ENCODE measurements at regions of chr3 and their contacts with region 1.

Region 1: GRCh38 chr3:14178247-14179113 is at the starts of genes LSM3 and XPC:
- DNase-seq: peak; percentile 97 to 100 (median 99)
- H3K4me3 ChIP-seq: peak within 1 kb of the TSS; percentile 78 to 81
- H3K4me3 Mint-ChIP-seq: peak within 1 kb of the TSS; percentile 92 to 99 (median 97)
- H3K27ac ChIP-seq: peak within 1 kb of the TSS; percentile 97
- H3K27ac Mint-ChIP-seq: peak within 1 kb of the TSS; percentile 93 to 100 (median 99)
- H3K4me1 ChIP-seq: peaks cover 57% of the 10 kb centered on the region
- H3K4me1 Mint-ChIP-seq: peaks cover 55 to 81% (median 63%) of the 10 kb centered on the region in 4 donors
- H3K27me3 ChIP-seq: no peaks in the 10 kb centered on the region
- H3K27me3 Mint-ChIP-seq: no peaks in the 10 kb centered on the region
- total RNA-seq, gene LSM3: 7.2 to 8.2 TPM
- total RNA-seq, gene XPC: 104 to 108 TPM

Region 2: DNA sequence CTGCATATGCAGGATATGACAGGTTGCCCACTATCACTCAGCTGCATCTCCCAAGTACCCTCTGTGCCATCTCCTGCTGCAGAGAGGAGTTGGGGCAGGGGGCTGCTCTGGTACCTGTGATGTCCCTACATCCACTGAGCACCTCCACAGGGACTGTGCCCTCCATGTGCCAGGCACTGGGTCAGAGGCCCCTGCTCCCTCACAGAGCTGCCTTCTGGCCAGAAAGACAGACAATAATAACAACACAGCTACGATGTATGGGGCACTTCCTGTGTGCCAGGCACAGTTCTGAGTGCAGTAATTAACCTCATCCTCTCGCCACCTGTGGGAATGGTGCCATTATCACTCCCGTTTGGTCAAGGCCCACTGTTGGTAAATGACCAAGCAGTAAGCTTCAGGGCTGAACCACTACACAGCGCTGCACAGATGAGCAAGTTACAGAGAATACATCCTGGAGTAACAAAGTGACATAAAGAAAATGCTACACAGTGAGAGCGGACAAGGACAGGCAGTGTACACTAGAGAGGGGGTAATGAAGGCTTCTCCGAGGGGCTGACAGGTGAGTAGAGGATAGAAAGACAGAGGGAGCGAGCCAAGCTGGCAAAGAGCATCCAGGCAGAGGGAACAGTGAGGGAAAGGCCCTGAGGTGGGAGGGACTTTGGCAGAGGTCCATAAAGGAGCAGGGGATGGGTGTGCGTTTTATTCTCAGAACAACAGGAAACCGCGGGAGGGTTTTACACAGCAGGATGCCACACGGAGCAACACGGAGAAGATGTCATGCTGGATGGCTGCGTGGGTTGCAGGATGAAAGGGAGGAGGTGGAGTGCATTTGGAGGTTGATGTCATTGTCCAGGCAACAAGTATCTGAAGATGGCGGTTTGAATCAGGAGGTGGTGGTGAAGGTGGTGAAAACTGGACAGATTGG is 312.2 kb before region 1 on chr3:
- CTCF ChIA-PET with region 1: no interaction called
- POLR2A ChIA-PET with region 1: interaction called, 11 read pairs
- intact Hi-C with region 1: no loop called
- DNase-seq: peak; percentile 80 to 87 (median 84)
- H3K4me3 ChIP-seq: peak overlapping the region in 1 of 2 donors; percentile 36
- H3K4me3 Mint-ChIP-seq: peak overlapping the region; percentile 72 to 84 (median 79)
- H3K27ac ChIP-seq: peak overlapping the region; percentile 64
- H3K27ac Mint-ChIP-seq: peak overlapping the region; percentile 83 to 100 (median 98)
- H3K4me1 ChIP-seq: peaks cover 72% of the 10 kb centered on the region
- H3K4me1 Mint-ChIP-seq: peaks cover 48 to 75% (median 63%) of the 10 kb centered on the region in 4 donors
- H3K27me3 ChIP-seq: no peaks in the 10 kb centered on the region
- H3K27me3 Mint-ChIP-seq: no peaks in the 10 kb centered on the region

Region 3: GRCh38 chr3:14133255-14133701 is 45.2 kb before region 1 on chr3:
- CTCF ChIA-PET with region 1: no interaction called
- POLR2A ChIA-PET with region 1: interaction called, 270 read pairs
- intact Hi-C with region 1: no loop called
- DNase-seq: no peak
- H3K4me3 ChIP-seq: no peak overlapping the region
- H3K4me3 Mint-ChIP-seq: no peak overlapping the region
- H3K27ac ChIP-seq: no peak overlapping the region
- H3K27ac Mint-ChIP-seq: peak overlapping the region in 5 of 7 donors; percentile 9 to 89 (median 55)
- H3K4me1 ChIP-seq: no peaks in the 10 kb centered on the region
- H3K4me1 Mint-ChIP-seq: peaks cover 7 to 22% (median 8%) of the 10 kb centered on the region in 4 donors
- H3K27me3 ChIP-seq: no peaks in the 10 kb centered on the region
- H3K27me3 Mint-ChIP-seq: no peaks in the 10 kb centered on the region

Region 4: DNA sequence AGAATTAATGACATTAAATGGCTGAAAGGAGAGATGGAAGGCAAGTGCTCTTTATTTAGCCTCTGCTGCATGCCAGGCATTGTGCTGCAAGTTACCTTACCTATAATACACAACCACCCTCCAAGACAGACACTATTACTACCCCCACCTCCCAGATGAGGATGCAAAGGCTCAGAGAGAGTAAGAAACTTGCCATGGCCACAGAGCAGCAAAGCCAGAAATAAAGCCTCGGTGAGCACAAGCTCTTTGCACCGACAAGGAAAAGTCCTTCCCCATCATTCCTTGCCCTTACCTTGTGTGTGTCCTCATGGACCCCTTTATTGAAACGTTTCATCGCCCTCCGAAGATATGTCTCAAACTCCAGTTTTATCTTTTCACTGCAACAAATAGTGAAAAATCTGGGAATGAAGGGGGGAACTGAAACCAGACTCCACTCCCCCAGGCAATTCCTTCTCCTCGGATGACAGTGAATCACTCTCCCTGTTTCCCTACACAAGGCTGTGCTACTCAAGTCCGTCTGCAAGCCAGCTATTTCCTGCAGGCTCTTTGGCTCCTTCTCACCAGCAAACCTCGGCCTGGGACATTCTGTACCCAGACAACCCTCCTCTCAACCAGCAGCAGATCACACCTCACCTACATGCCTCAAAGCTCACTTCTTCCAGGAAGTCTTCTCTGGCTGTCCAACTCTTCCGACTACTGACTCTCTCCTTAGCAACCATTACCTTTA is 11.4 kb before region 1 on chr3:
- CTCF ChIA-PET with region 1: no interaction called
- POLR2A ChIA-PET with region 1: interaction called, 19 read pairs
- intact Hi-C with region 1: no loop called
- DNase-seq: no peak
- H3K4me3 ChIP-seq: no peak overlapping the region
- H3K4me3 Mint-ChIP-seq: no peak overlapping the region
- H3K27ac ChIP-seq: no peak overlapping the region
- H3K27ac Mint-ChIP-seq: peak overlapping the region in 4 of 7 donors; percentile 13 to 77 (median 54)
- H3K4me1 ChIP-seq: no peaks in the 10 kb centered on the region
- H3K4me1 Mint-ChIP-seq: peaks cover 13 to 43% (median 34%) of the 10 kb centered on the region in 4 donors
- H3K27me3 ChIP-seq: no peaks in the 10 kb centered on the region
- H3K27me3 Mint-ChIP-seq: no peaks in the 10 kb centered on the region

Region 5: DNA sequence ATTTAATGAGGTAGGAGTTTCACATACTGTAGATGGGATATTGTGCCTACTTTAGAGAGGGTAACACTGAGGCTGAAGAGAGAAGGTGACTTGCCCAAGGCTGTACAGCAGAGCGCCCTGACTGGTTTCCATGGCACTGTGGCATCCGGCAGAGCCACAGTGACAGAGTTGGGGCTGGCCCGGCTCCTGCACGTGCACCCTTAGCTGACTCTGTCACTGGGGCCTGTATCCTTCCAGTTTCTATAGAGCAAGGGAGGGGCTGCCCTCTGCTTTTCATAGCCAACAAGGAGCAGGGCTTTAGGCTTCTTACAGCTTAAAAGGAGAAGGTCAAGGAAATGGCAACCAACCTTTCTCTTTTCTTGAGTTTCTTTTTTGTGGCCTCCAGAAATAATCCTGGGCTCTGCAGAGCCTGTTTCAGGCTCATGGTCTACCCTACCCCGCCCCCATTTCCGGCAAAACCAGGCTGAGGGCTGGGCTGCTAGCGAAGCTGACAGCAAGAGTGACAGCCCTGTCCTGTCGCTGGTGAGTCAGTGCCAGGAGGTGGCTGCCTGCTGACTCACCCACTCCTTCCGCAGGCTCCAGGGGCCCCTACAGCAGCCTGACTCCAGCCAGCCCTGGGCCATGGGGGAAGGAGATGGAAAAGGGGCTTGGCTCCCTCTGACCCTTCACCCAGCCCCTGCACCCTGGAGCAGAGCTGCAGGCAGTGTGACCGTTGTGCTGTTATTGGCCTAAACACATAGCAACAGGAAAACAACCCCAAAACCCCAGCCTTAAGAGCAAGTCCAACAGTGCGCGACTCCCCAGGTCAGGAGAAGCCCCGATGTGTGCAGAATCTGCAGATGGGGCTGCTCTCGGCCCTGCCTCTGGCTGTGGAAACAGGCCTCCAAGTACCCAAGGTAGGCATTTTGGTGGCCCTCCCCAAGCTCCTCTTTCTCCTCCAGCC is 253.7 kb after region 1 on chr3:
- CTCF ChIA-PET with region 1: interaction called, 4 read pairs
- POLR2A ChIA-PET with region 1: interaction called, 10 read pairs
- intact Hi-C with region 1: loop called (anchors 2 kb)
- DNase-seq: peak; percentile 93 to 99 (median 94)
- H3K4me3 ChIP-seq: peak overlapping the region; percentile 55 to 77
- H3K4me3 Mint-ChIP-seq: peak overlapping the region; percentile 77 to 93 (median 80)
- H3K27ac ChIP-seq: peak overlapping the region; percentile 98
- H3K27ac Mint-ChIP-seq: peak overlapping the region; percentile 97 to 100 (median 100)
- H3K4me1 ChIP-seq: peaks cover 97% of the 10 kb centered on the region
- H3K4me1 Mint-ChIP-seq: peaks cover 64 to 98% (median 87%) of the 10 kb centered on the region in 4 donors
- H3K27me3 ChIP-seq: no peaks in the 10 kb centered on the region
- H3K27me3 Mint-ChIP-seq: no peaks in the 10 kb centered on the region

Region 6: DNA sequence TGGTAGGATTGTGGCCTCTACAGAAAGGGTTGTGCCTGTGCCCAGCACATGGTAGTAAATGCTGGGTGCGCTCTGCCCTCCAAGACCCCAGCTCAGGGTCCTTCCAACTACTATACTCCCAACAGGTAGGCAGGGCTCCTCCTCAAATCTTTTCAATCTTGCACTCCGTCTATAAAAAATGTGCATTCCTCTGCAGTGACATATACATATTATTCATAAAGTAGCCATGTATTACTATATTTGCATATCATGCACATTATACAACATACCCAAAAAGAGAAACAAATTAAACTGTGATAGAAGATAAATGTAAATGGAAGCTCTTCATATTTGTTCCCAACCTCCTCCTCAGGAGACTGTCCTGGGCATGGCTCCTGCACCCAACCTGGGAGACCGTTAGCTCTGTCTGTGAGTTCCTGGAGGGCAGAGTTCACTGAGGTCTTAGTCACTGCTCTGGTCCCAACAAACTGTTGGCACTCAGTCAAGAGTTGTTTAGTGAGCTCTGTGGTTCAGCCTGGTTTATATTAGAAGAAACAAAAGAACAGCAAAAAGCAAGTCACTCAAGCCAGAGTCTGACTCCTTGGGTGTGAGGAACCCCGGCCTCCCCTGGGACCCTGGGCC is 409.4 kb after region 1 on chr3:
- CTCF ChIA-PET with region 1: no interaction called
- POLR2A ChIA-PET with region 1: no interaction called
- intact Hi-C with region 1: no loop called
- DNase-seq: no peak
- H3K4me3 ChIP-seq: no peak overlapping the region
- H3K4me3 Mint-ChIP-seq: no peak overlapping the region
- H3K27ac ChIP-seq: no peak overlapping the region
- H3K27ac Mint-ChIP-seq: no peak overlapping the region
- H3K4me1 ChIP-seq: no peaks in the 10 kb centered on the region
- H3K4me1 Mint-ChIP-seq: no peaks in the 10 kb centered on the region
- H3K27me3 ChIP-seq: no peaks in the 10 kb centered on the region
- H3K27me3 Mint-ChIP-seq: peaks cover 15 to 29% of the 10 kb centered on the region in 2 donors

Region 7: GRCh38 chr3:14962762-14963161 is 784.3 kb after region 1 on chr3:
- CTCF ChIA-PET with region 1: no interaction called
- POLR2A ChIA-PET with region 1: no interaction called
- intact Hi-C with region 1: no loop called
- DNase-seq: no peak
- H3K4me3 ChIP-seq: no peak overlapping the region
- H3K4me3 Mint-ChIP-seq: no peak overlapping the region
- H3K27ac ChIP-seq: no peak overlapping the region
- H3K27ac Mint-ChIP-seq: no peak overlapping the region
- H3K4me1 ChIP-seq: peaks cover 22% of the 10 kb centered on the region
- H3K4me1 Mint-ChIP-seq: peaks cover 20 to 37% (median 22%) of the 10 kb centered on the region in 4 donors
- H3K27me3 ChIP-seq: no peaks in the 10 kb centered on the region
- H3K27me3 Mint-ChIP-seq: no peaks in the 10 kb centered on the region

Region 8: DNA sequence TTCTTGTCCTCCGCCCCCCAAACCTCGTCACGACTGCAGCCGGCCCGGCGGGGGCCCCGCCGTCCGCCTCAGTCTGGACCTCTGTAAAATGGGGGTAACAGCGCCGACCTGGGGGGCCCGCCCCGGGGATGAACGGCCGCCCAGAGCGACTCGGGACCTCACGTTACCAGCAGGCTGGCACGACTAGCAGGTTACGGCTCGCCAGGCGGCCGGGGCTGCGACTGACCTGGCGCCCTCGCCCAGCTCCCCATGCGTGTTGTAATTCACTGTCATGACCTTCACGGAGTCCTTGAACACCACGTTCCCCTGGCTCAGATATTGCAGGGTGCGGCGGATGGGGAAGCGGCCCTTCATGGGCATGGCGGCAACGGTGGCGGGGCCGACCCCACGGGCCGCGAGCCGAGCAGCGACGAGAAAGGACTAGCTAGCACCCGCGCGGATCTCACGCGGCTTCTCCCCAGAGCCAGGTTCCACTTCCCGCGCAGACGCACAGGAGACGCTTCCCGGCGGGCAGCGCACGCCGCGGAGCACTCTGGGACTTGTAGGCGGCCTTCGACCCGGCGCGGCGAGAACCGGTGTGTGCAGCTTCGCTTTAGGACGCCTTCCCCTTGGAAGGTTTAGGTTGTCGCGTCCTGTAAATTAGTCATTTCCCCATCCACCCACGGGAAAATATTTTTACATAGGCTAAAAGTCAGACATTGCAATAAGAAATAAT is 886.5 kb after region 1 on chr3 and contains the start of gene MRPS25:
- CTCF ChIA-PET with region 1: no interaction called
- POLR2A ChIA-PET with region 1: interaction called, 4 read pairs
- intact Hi-C with region 1: loop called (anchors 1 kb)
- DNase-seq: peak; percentile 86 to 90 (median 89)
- H3K4me3 ChIP-seq: peak within 1 kb of the TSS; percentile 19 to 78
- H3K4me3 Mint-ChIP-seq: peak within 1 kb of the TSS; percentile 93 to 99 (median 96)
- H3K27ac ChIP-seq: peak within 1 kb of the TSS; percentile 79
- H3K27ac Mint-ChIP-seq: peak within 1 kb of the TSS; percentile 88 to 98 (median 96)
- H3K4me1 ChIP-seq: peaks cover 18% of the 10 kb centered on the region
- H3K4me1 Mint-ChIP-seq: peaks cover 11 to 34% (median 23%) of the 10 kb centered on the region in 4 donors
- H3K27me3 ChIP-seq: no peaks in the 10 kb centered on the region
- H3K27me3 Mint-ChIP-seq: no peaks in the 10 kb centered on the region
- total RNA-seq, gene MRPS25: 77.1 to 80.3 TPM